ENCODE measurements at regions of chr10 and their contacts with region 1.

Region 1: DNA sequence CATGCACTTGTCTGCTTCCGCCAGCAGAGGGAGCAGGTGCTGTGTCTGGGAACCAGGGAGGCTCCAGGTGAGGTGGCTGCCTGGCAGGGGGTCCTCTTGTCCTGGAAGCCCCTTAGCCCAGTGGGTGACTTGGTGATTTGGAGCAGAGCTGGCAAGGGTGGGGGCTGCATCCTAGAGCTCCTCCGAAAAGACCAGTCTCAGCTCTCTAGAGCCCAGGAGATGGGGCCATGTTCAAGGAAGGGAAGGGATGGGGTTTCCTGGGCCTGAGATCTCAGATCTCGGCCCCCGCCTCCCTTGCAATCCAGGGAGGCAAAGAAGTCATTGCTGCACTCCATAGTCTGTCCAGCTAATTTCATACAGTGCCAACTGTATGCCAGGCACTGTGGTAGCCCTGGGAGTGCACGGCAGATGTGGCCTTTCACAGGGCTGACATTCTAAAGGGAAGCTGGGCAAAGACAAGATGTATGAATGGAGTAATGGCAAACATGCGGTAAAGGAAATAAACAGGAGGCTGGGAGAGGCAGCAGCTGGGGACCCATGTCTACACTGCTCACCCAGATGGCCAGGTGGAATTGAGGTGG is 20.4 kb upstream of the SFRP5 start:
- DNase-seq: peak; percentile 86
- H3K4me3 Mint-ChIP-seq: no peak overlapping the region
- H3K27ac Mint-ChIP-seq: no peak overlapping the region
- H3K4me1 Mint-ChIP-seq: peaks cover 28% of the 10 kb centered on the region
- H3K27me3 Mint-ChIP-seq: no peaks in the 10 kb centered on the region

Region 2: DNA sequence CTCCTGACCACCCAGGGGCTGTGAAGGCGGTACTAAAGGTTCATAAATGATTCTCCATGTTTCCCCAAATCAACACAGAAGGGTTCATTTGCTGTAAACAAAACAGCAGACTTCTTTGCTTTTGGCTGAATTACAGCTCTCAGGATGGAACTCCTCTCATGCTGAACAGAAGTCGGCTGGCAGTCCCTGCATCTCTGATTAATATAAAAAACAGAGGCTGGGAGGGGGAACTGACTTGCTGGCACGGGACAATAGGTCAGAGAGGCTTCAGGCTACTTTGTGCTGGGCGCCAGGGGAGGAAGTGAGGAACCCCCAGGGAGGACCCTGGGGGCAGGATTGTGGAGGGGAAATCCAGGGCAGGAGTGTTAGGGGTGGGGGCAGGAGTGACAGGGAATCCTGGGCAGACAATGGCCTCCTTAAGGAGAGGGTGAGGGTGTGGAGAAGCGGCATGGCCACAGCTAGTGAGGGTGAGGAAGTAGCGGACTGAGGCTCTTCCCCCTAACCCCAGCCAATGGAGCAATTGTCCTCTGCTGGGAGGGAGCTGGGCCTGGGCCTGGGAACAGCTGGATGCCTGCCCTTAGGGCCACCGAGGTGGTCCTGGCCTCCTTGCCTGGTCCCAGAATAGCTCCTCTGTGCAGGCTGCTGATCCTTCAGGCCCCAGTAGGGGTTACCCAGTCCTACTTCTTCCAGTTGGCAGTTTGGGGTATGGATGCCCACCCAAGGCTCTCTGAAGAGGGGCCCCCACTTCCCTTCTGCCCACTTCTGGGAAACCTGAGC is 11.2 kb before region 1 on chr10:
- CTCF ChIA-PET with region 1: interaction called, 10 read pairs
- intact Hi-C with region 1: no loop called
- DNase-seq: no peak
- H3K4me3 Mint-ChIP-seq: no peak overlapping the region
- H3K27ac Mint-ChIP-seq: no peak overlapping the region
- H3K4me1 Mint-ChIP-seq: peaks cover 26% of the 10 kb centered on the region
- H3K27me3 Mint-ChIP-seq: no peaks in the 10 kb centered on the region

Region 3: GRCh38 chr10:97830064-97830463 is 37.8 kb after region 1 on chr10:
- CTCF ChIA-PET with region 1: interaction called, 12 read pairs
- intact Hi-C with region 1: no loop called
- DNase-seq: no peak
- H3K4me3 Mint-ChIP-seq: no peak overlapping the region
- H3K27ac Mint-ChIP-seq: no peak overlapping the region
- H3K4me1 Mint-ChIP-seq: peaks cover 19% of the 10 kb centered on the region
- H3K27me3 Mint-ChIP-seq: no peaks in the 10 kb centered on the region

Region 4: GRCh38 chr10:97849687-97850402 is 57.6 kb after region 1 on chr10 and contains the start of gene GOLGA7B:
- CTCF ChIA-PET with region 1: interaction called, 6 read pairs
- intact Hi-C with region 1: loop called (anchors 1 kb)
- DNase-seq: peak; percentile 62
- H3K4me3 Mint-ChIP-seq: peak within 1 kb of the TSS; percentile 77
- H3K27ac Mint-ChIP-seq: no peak within 1 kb of the TSS
- H3K4me1 Mint-ChIP-seq: peaks cover 34% of the 10 kb centered on the region
- H3K27me3 Mint-ChIP-seq: no peaks in the 10 kb centered on the region
- total RNA-seq, gene GOLGA7B: 0.25 to 0.31 TPM

Region 5: DNA sequence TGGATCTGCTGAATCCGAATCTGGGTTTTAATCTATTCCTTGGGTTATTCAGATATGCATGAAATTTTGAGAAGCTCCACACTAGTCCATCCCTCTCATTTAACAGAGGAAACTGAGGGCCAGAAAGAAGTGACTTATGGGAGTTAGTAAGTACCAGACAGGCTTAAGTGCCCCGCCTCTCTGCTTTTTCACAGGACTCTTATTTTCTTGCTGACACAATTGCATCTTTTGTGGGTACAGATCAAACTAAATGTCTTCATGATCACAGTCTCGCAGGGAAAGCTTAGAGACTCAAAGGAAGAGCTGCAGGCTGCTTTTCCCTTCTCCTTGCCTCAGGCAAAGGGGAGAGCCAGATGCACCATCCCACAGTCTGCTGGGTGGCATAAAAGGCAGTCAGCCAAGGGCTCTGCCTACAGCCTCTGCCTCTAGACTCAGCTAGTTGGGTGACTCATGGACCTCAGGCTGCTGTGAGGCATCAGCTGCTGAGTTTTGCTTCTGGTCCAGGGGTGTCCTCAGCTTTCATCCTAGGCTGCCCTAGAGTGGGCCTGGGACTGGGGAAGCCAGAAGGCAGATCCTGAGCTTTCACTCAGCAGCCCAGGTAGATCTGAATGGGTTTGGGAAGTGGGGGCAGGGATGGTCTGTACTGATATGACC is 69.0 kb after region 1 on chr10:
- CTCF ChIA-PET with region 1: interaction called, 41 read pairs
- intact Hi-C with region 1: no loop called
- DNase-seq: no peak
- H3K4me3 Mint-ChIP-seq: no peak overlapping the region
- H3K27ac Mint-ChIP-seq: no peak overlapping the region
- H3K4me1 Mint-ChIP-seq: peaks cover 9% of the 10 kb centered on the region
- H3K27me3 Mint-ChIP-seq: no peaks in the 10 kb centered on the region

Region 6: GRCh38 chr10:98028168-98028770 is 236.0 kb after region 1 on chr10:
- CTCF ChIA-PET with region 1: interaction called, 5 read pairs
- intact Hi-C with region 1: loop called (anchors 5 kb)
- DNase-seq: peak; percentile 83
- H3K4me3 Mint-ChIP-seq: no peak overlapping the region
- H3K27ac Mint-ChIP-seq: no peak overlapping the region
- H3K4me1 Mint-ChIP-seq: peaks cover 4% of the 10 kb centered on the region
- H3K27me3 Mint-ChIP-seq: peaks cover 55% of the 10 kb centered on the region

Measured in activated naive CD4-positive, alpha-beta T cell treated with anti-CD3 and anti-CD28 coated beads for 36 hours (primary cell).